HEK293T (cell line): ENCODE measurements at regions of chr4 and their contacts with region 1.

Region 1: DNA sequence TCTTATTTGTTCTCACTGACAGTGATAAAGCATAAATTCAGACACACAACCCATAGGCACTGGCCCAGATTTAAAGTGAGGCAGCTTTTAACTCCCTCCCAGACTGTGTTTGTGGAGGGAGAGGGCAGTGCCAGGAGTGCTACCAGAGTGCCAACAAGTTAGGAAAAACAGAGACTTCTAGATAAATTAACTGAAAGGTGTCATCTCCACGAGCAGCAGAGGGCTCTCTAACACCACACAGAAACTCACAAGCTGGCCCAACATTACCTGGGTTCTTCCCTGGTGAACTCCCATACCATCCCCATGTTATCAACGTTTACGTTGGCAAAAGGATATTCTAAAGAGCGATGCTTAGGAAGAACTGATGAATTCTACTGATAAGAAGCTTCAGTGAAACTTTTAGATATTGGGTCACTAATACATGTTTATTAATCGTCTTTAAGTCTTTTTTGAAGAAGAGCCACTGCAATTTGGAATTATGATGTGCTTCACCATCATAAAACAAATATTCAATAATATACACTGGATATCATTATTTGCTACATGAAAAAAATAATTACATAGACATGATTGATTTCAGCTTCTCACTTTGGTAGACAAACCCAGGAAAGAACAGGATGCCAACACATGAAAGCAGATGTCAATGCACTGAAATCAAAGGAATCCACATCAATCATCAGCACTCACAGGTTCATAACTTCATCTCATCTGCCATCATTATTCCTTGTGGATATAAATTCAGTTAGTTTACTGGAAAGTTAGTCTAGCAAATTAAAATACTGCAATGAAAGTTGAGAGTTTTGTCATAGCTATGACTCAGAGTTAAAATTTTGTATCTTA is 121.2 kb upstream of the NAP1L5 start:
- DNase-seq: peak; percentile 28

Region 2: GRCh38 chr4:89024051-89024675 is 205.3 kb after region 1 on chr4:
- CTCF ChIA-PET with region 1: interaction called, 29 read pairs
- POLR2A ChIA-PET with region 1: interaction called, 3 read pairs
- DNase-seq: peak; percentile 60